Common myeloid progenitor, CD34-positive (primary cell): ENCODE measurements at regions of chr2 and their contacts with region 1.

Region 1: GRCh38 chr2:138787053-138787666 is 7.0 kb upstream of the NXPH2 start:
- DNase-seq: peak; percentile 26 to 69 (median 60)
- H3K4me3 ChIP-seq: no peak overlapping the region
- H3K27ac ChIP-seq: no peak overlapping the region
- H3K4me1 ChIP-seq: no peaks in the 10 kb centered on the region
- H3K27me3 ChIP-seq: peaks cover 0 to 19% (median 2%) of the 10 kb centered on the region in 5 experiments

Region 2: DNA sequence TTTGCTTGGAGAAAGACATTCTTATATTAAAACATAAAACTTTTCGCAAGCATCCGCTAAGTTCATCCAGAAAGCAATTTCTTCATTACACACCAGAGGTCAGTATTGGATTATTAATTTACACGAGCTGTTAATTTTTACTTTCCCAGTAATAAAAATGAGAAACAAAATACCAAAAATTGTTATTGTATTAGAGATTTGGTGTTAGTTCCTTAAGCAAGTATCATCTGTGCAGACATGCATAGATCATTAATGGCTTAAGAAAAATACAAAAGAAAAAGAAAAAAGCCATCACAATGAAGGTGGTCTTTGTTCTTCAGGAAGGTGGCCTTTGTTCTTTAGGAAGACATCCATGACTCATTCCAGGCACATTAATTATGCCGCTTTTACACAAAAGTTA is 876.5 kb before region 1 on chr2:
- CTCF ChIA-PET with region 1: interaction called, 25 read pairs
- POLR2A ChIA-PET with region 1: no interaction called
- DNase-seq: peak; percentile 20 to 44 (median 41)
- H3K4me3 ChIP-seq: no peak overlapping the region
- H3K27ac ChIP-seq: no peak overlapping the region
- H3K4me1 ChIP-seq: no peaks in the 10 kb centered on the region
- H3K27me3 ChIP-seq: no peaks in the 10 kb centered on the region

Region 3: DNA sequence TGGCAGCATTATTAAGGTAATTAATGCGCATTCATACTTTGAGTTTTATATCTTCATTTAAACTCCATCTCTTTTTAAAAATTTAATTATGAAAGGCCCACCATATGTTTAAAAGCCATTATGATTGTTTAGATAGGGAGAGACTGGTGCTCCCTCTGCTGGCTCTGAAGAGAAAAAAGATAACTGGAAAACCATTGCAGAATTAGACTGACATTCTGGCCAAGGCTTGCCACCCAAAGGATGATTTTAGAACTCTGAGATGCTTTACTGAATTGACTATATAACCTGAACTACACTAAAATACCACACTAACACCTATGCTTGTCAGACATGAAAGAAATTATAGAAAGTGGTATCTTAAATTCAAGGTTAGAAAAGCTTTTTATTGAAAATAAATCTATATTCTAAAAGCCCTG is 413.2 kb before region 1 on chr2:
- CTCF ChIA-PET with region 1: interaction called, 15 read pairs
- POLR2A ChIA-PET with region 1: no interaction called
- DNase-seq: peak; percentile 36 to 66 (median 64)
- H3K4me3 ChIP-seq: no peak overlapping the region
- H3K27ac ChIP-seq: no peak overlapping the region
- H3K4me1 ChIP-seq: no peaks in the 10 kb centered on the region
- H3K27me3 ChIP-seq: no peaks in the 10 kb centered on the region